ENCODE measurements at regions of chr5 and their contacts with region 1.

Region 1: DNA sequence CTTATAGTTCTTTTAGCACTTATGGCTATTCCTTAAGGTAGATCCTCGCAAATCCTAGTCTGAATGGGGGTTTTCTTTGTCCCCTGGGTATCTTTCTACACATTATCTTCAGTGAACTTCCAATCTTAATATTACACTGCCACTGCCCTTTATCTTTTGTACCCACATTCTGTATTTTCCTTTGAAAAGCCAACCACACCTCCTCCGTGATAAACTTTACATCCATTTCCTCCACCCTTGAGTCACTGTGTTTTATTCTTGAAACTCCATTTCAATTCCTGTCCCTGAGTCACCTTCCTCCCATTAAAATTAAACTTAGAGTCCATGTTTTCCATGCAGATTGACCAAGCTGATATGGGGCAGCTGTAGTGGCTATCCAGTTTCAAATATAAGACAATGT is 43.2 kb upstream of the RICTOR start:
- DNase-seq: peak; percentile 26
- H3K4me3 ChIP-seq: no peak overlapping the region
- H3K27me3 ChIP-seq: no peaks in the 10 kb centered on the region
- CTCF ChIP-seq: no peak

Region 2: GRCh38 chr5:38961691-38962090 is 155.7 kb before region 1 on chr5:
- CTCF ChIA-PET with region 1: no interaction called
- POLR2A ChIA-PET with region 1: no interaction called
- DNase-seq: no peak
- H3K4me3 ChIP-seq: no peak overlapping the region
- H3K27me3 ChIP-seq: no peaks in the 10 kb centered on the region
- CTCF ChIP-seq: no peak

Region 3: DNA sequence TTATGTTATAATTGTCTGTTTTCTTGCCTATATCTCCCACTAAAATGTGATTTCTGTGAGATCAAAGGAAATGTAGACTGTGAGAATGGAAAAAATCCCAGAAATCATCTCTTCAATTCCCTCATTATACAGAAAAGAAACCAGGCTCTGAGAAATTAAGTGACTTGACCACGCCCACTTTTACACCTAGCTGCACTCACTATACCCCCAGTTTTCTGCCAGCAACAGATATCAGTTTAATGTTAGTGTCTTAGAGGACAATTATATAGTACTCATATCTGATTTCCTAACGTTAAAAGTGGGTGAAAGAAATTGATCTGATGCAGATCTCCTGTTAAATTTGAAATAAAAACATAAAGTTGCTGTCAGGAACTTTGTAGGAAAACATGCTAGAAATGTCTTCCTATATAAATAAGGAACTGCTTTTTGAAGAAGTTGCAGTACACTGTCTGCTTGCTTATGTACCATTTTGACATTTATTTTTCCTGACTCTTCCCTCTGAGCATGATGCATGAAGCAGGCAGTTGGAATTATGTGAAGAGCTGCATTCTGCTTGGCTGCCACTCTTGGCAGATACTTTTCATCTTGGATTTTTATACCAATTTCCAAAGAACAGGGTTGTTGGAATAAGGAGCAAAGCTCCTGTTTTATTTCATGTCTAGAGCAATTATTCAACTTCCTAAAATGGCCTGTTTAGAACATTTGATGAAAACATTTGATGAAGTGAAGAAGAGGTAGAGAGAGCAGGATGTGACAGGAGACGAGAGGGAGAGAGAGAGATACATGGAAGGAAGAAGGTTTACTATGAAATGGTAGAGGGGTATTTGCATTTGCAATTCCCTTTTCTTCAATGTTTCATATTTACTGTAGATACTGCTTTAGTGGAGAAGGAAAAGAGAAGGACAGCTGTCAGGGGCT is 14.1 kb after region 1 on chr5:
- CTCF ChIA-PET with region 1: interaction called, 3 read pairs
- POLR2A ChIA-PET with region 1: interaction called, 12 read pairs
- DNase-seq: no peak
- H3K4me3 ChIP-seq: no peak overlapping the region
- H3K27me3 ChIP-seq: no peaks in the 10 kb centered on the region
- CTCF ChIP-seq: no peak

Region 4: GRCh38 chr5:39217365-39218281 is 100.2 kb after region 1 on chr5:
- CTCF ChIA-PET with region 1: no interaction called
- POLR2A ChIA-PET with region 1: no interaction called
- DNase-seq: peak; percentile 14
- H3K4me3 ChIP-seq: no peak overlapping the region
- H3K27me3 ChIP-seq: no peaks in the 10 kb centered on the region
- CTCF ChIP-seq: peak; percentile 95